Dorsolateral prefrontal cortex (tissue), 120 donors: ENCODE measurements at regions of chr18 and their contacts with region 1.

Region 1: GRCh38 chr18:2932247-2933181 is 80.4 kb downstream of the LPIN2 start:
- DNase-seq: peak in 1 of 10 donors; percentile 39
- H3K4me3 ChIP-seq: no peak overlapping the region
- H3K27ac ChIP-seq: peak overlapping the region in 2 of 59 donors; percentile 7 to 41
- H3K27me3 ChIP-seq: no peaks in the 10 kb centered on the region
- CTCF ChIP-seq: peak; percentile 72 to 94 (median 84)

Region 2: DNA sequence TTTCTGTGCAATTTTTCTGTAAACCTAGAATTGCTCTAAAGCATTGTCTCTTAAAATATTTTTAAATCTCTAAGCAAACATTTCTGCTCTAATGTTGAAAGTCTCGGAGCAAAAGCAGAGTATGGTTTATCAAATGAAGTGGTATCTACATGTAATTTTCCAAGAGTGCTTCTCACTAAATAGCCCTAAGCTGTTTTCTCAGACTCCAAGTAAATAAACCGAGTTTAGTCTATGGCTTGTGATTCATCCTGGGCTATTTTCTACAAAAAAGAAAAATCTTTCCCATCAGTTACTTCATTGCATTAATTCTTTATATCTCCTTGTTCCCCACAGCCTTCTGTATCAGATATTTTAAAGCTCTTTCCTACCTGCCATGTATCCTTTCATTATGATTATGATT is 451.9 kb before region 1 on chr18:
- intact Hi-C with region 1: no loop called
- DNase-seq: no peak
- H3K4me3 ChIP-seq: no peak overlapping the region
- H3K27ac ChIP-seq: no peak overlapping the region
- H3K27me3 ChIP-seq: no peaks in the 10 kb centered on the region
- CTCF ChIP-seq: no peak

Region 3: GRCh38 chr18:2869207-2869606 is 63.3 kb before region 1 on chr18:
- intact Hi-C with region 1: no loop called
- DNase-seq: no peak
- H3K4me3 ChIP-seq: no peak overlapping the region
- H3K27ac ChIP-seq: no peak overlapping the region
- H3K27me3 ChIP-seq: peaks cover 0 to 9% (median 0%) of the 10 kb centered on the region in 45 donors
- CTCF ChIP-seq: no peak

Region 4: GRCh38 chr18:3002732-3003131 is 70.2 kb after region 1 on chr18:
- intact Hi-C with region 1: no loop called
- DNase-seq: no peak
- H3K4me3 ChIP-seq: no peak overlapping the region
- H3K27ac ChIP-seq: no peak overlapping the region
- H3K27me3 ChIP-seq: no peaks in the 10 kb centered on the region
- CTCF ChIP-seq: no peak

Region 5: DNA sequence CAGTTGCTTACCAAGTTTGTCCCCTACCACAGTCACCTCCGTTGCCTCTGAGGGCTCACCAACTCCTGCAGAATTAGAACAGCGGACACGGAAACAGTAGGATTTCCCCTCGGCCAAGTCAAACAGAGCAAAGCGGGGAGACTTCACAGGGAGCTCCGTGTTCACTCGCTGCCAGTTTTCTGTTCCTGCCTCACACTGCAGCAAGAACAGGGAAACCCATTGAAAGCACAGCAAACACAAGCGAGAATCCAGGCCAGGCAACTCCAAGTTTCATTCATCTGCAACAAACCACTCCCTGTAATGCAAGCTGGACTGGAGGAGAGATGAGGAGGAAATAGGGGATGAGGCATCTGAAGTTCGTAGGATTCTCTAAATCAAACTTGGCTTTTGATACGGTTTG is 203.0 kb after region 1 on chr18:
- intact Hi-C with region 1: loop called in 1 of 2 experiments (anchors 5 kb)
- DNase-seq: peak in 3 of 10 donors; percentile 8 to 46 (median 28)
- H3K4me3 ChIP-seq: peak overlapping the region in 10 of 59 donors; percentile 1 to 37 (median 16)
- H3K27ac ChIP-seq: peak overlapping the region in 31 of 59 donors; percentile 1 to 78 (median 42)
- H3K27me3 ChIP-seq: no peaks in the 10 kb centered on the region
- CTCF ChIP-seq: no peak

Region 6: DNA sequence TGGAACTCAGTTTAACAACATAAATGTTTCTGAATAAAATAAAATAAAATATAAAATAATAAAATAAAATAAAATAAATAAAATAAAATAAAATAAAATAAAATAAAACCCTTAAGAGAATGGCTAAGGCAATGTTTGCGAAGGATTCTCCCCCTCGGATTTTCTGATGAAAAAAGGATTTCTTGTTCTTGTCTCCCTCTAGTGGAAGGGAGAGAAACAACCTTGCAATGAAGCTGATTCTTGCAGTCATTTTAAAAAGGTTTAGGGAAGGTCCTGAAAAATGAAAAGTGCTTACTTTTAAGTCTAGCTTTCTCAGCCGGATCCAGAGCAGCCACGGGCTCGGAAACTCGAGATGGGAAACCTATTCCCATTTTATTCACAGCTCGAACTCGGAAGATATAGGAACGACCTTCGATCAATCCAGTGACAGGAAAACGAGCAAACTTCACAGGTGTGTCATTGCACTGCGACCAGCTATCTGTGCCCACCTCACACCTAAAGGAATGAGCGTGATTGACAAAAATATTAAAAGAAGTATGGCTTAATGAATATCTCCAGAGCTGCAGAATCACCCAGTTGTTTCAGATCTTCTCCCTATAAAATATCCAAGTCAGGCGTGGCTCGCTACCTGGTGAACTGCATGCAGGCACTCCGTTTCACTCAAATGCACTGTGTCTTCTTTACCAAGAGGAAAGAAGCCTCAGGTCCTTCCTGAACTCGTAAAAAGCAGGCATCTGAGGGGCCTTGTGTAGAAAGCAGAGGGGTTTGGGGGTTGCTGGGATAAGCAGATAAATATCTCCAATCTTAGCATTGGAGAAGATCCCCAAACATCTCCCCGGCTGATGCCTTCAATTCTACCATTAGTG is 219.1 kb after region 1 on chr18:
- intact Hi-C with region 1: loop called (anchors 5 kb)
- DNase-seq: no peak
- H3K4me3 ChIP-seq: no peak overlapping the region
- H3K27ac ChIP-seq: no peak overlapping the region
- H3K27me3 ChIP-seq: no peaks in the 10 kb centered on the region
- CTCF ChIP-seq: peak; percentile 66 to 90 (median 82)